ENCODE measurements at regions of chr3 and their contacts with region 1.

Region 1: DNA sequence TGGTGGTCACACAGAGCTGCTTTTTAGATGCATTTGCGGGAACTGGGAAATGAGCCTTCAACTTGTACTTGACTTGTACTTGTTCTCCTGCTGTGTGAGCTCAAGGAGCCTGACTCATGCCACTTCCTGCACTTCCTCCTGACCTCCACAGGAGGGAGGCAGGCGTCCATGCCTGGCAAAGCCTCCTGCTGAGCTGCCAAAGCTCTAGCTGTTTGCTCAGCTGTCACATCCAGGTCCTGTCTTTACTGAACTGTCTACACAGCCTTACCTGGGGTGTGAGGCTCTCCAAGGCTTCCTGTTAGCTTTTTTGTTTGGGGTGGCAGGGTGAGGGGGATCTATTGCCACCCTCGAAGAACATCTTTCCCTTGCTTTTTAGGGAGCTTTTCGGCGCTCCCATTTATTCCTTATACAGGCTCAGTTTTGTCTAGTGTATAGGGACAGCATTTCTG is 6.4 kb downstream of the THPO start:
- DNase-seq: peak; percentile 77
- CTCF ChIP-seq: peak; percentile 82

Region 2: GRCh38 chr3:184354121-184354728 is 17.4 kb before region 1 on chr3:
- CTCF ChIA-PET with region 1: interaction called, 18 read pairs
- POLR2A ChIA-PET with region 1: no interaction called
- DNase-seq: peak; percentile 84
- CTCF ChIP-seq: peak; percentile 87

Measured in GM10248 (cell line).